ENCODE measurements at regions of chr7 and their contacts with region 1.

Region 1: GRCh38 chr7:31744294-31744874 is 57.4 kb downstream of the PPP1R17 start:
- DNase-seq: no peak
- ATAC-seq: peak; percentile 57
- H3K4me3 Mint-ChIP-seq: no peak overlapping the region
- H3K27ac Mint-ChIP-seq: no peak overlapping the region
- H3K4me1 Mint-ChIP-seq: no peaks in the 10 kb centered on the region
- H3K27me3 Mint-ChIP-seq: peaks cover 2% of the 10 kb centered on the region
- CTCF ChIP-seq: no peak

Region 2: GRCh38 chr7:31729198-31729781 is 15.1 kb before region 1 on chr7:
- CTCF ChIA-PET with region 1: no interaction called
- POLR2A ChIA-PET with region 1: no interaction called
- intact Hi-C with region 1: no loop called
- DNase-seq: no peak
- ATAC-seq: no peak
- H3K4me3 Mint-ChIP-seq: no peak overlapping the region
- H3K27ac Mint-ChIP-seq: no peak overlapping the region
- H3K4me1 Mint-ChIP-seq: no peaks in the 10 kb centered on the region
- H3K27me3 Mint-ChIP-seq: no peaks in the 10 kb centered on the region
- CTCF ChIP-seq: no peak

Region 3: DNA sequence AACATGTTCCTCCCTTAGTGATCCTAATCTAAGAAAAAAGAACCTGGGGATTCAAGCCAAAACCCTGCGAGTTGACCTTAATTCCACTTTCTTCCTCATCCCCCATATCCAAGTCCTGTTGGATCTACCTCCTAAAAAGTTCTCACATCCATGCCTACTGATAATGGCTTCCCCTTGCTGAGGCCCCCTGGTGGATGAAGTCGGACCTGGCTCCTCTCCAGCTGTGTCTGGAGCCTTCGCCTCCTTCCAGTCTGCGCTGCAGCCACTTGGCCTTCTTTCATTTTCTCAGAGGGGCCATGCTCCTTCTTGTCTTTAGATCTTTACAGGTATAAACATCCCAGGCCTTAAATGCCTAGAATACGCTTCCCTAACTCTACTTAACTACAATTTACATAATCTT is 317.8 kb after region 1 on chr7:
- CTCF ChIA-PET with region 1: no interaction called
- POLR2A ChIA-PET with region 1: no interaction called
- intact Hi-C with region 1: loop called (anchors 5 kb)
- DNase-seq: no peak
- ATAC-seq: no peak
- H3K4me3 Mint-ChIP-seq: no peak overlapping the region
- H3K27ac Mint-ChIP-seq: no peak overlapping the region
- H3K4me1 Mint-ChIP-seq: no peaks in the 10 kb centered on the region
- H3K27me3 Mint-ChIP-seq: no peaks in the 10 kb centered on the region
- CTCF ChIP-seq: no peak